Heart right ventricle (tissue), 16 donors: ENCODE measurements at regions of chr5 and their contacts with region 1.

Region 1: DNA sequence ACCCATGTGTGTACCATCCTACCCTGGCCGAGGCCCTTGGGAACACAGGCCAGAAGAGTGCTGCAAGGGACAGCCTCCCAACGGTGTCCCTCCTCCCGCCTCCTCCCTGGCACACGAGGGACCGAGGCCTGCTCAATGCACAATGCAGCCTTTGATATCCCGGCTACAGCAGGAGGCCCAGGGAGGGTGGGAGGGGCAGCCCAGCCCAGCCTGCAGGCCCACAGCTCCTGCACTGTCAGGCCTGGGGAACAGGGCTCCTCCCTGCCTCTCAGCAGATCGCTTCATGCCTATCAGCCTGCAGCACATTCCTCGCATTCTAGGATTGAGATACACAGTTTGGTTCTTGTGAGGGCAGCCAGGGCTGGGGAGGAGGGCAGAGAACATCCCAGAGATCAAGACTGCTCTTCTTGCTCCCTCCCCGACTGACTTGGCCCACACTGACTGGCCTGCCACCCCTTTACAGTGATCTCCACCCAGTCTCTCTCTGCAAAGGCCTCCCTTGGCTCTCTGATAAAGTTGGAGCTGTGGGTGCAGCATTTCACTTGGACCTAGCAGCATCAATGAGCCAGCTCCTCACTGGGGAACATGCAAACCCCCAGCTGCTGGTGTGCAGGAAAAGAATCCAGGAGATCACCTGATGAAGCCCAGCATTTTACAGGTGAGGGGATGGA is at the start of gene SH3TC2:
- DNase-seq: peak; percentile 66 to 74
- ATAC-seq: peak; percentile 71 to 92 (median 87)
- H3K4me3 ChIP-seq: peak within 1 kb of the TSS in 5 of 10 donors; percentile 1 to 23 (median 7)
- H3K27ac ChIP-seq: peak within 1 kb of the TSS; percentile 6 to 94 (median 84)
- H3K4me1 ChIP-seq: peaks cover 8 to 64% (median 58%) of the 10 kb centered on the region in 9 donors
- H3K27me3 ChIP-seq: no peaks in the 10 kb centered on the region
- CTCF ChIP-seq: no peak
- total RNA-seq, gene SH3TC2: 0.97 to 13.1 (median 7.4) TPM

Region 2: GRCh38 chr5:149088686-149089085 is 25.5 kb after region 1 on chr5:
- intact Hi-C with region 1: loop called in 1 of 10 experiments (anchors 2 kb)
- DNase-seq: peak in 1 of 2 donors; percentile 31
- ATAC-seq: peak; percentile 55 to 94 (median 76)
- H3K4me3 ChIP-seq: no peak overlapping the region
- H3K27ac ChIP-seq: peak overlapping the region in 4 of 10 donors; percentile 45 to 67 (median 46)
- H3K4me1 ChIP-seq: peaks cover 0 to 11% (median 0%) of the 10 kb centered on the region in 9 donors
- H3K27me3 ChIP-seq: no peaks in the 10 kb centered on the region
- CTCF ChIP-seq: no peak

Region 3: DNA sequence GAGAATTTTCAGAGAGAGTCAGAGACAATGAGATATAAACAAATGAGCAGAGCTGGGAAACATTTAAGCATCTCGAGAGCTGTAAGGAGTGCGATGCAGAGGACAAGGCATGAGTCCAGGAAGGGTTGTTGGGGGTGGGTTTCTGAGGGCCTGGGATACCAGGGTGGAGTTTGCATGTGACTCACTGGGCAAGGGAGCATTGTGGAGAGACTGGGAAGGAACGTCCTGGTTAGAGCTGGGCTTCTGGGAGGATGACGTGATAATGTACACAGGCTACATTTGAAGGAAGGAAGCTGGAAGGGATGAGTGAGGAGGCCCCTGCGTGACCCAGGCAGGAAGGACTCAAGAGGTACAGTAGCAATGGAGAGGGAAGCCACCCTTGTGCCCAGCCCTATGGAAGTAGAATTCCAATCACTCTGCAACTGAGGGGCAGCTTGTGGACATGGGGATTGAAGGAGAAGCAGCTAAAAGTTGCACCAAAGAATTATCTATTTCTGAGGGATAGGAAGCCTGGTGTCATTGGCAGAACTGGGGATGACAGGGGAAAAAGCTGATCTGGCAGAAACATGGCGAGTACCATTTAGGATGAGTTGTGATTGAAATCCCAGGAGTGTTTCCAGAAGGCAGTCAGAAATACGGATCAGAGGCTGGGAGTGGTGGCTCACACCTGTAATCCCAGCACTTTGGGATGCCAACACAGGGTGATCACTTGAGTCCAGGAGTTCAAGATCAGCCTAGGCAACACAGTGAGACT is 149.2 kb after region 1 on chr5:
- intact Hi-C with region 1: no loop called
- DNase-seq: no peak
- ATAC-seq: peak in 1 of 8 donors; percentile 19
- H3K4me3 ChIP-seq: no peak overlapping the region
- H3K27ac ChIP-seq: peak overlapping the region in 7 of 10 donors; percentile 7 to 45 (median 21)
- H3K4me1 ChIP-seq: peaks cover 0 to 55% (median 43%) of the 10 kb centered on the region in 9 donors
- H3K27me3 ChIP-seq: no peaks in the 10 kb centered on the region
- CTCF ChIP-seq: no peak